ENCODE measurements at regions of chr15 and their contacts with region 1.

Region 1: GRCh38 chr15:77798151-77798835 is 165.6 kb upstream of the LINGO1 start:
- DNase-seq: no peak
- ATAC-seq: no peak
- H3K4me3 ChIP-seq: no peak overlapping the region
- H3K27ac ChIP-seq: no peak overlapping the region
- H3K4me1 ChIP-seq: no peaks in the 10 kb centered on the region
- CTCF ChIP-seq: no peak
- EP300 ChIP-seq: no peak
- POLR2A ChIP-seq: no peak
- RAD21 ChIP-seq: no peak

Region 2: GRCh38 chr15:76885212-76885611 is 913.1 kb before region 1 on chr15:
- CTCF ChIA-PET with region 1: no interaction called
- POLR2A ChIA-PET with region 1: no interaction called
- DNase-seq: no peak
- ATAC-seq: no peak
- H3K4me3 ChIP-seq: no peak overlapping the region
- H3K27ac ChIP-seq: no peak overlapping the region
- H3K4me1 ChIP-seq: no peaks in the 10 kb centered on the region
- CTCF ChIP-seq: no peak
- EP300 ChIP-seq: no peak
- POLR2A ChIP-seq: no peak
- RAD21 ChIP-seq: no peak

Region 3: DNA sequence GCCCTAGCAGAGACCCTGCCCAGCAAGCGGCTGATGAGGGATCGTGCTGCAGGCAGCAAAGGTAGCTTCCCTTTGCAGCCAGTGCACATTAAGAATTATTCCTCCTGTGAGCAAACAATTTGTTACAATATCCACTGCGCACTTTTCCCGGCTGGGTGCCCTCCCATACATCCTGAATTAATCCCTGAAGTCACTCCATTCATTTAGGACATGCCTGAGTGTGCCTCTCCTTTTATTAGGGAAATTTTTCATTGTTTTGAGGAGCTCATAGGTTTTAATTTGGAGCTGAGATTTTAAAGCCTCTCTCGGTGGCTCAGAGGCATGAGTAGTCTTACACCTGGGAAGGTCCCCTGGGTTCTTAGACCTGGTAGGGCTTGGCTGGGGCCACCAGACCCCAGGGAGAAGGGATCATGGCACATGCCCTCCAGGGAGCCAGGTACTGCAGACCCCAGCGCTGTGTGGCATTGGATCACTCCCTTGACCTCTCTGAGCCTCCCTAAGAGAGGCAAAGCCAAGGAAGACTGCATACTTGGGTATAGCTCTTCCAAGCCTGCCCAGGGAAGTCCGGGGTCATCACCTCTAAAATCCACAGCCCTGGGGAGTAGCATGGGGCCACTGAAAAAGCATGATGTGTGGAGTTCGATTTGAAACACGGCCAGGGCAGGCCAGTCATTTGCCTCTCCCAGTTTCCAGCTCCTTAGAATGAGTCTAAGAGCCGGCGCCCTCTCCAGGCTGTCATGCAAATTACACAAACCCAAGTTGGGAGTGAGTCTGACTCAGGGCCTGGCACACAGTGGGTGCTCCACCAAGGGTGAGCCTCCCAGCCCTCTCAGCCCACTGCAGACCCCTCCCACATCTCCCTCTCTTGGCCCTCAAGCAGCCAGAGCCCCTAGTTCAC is 13.6 kb before region 1 on chr15:
- CTCF ChIA-PET with region 1: interaction called, 24 read pairs
- POLR2A ChIA-PET with region 1: no interaction called
- DNase-seq: peak; percentile 64 to 84
- ATAC-seq: peak; percentile 58 to 91; a peak in 5 of 6 replicates
- H3K4me3 ChIP-seq: no peak overlapping the region
- H3K27ac ChIP-seq: no peak overlapping the region
- H3K4me1 ChIP-seq: no peaks in the 10 kb centered on the region
- CTCF ChIP-seq: peak; percentile 63
- EP300 ChIP-seq: no peak
- POLR2A ChIP-seq: no peak
- RAD21 ChIP-seq: peak; percentile 32 to 61; a peak in 3 of 5 replicates

Measured in A549 (cell line).